ENCODE measurements at regions of chr3 and their contacts with region 1.

Region 1: DNA sequence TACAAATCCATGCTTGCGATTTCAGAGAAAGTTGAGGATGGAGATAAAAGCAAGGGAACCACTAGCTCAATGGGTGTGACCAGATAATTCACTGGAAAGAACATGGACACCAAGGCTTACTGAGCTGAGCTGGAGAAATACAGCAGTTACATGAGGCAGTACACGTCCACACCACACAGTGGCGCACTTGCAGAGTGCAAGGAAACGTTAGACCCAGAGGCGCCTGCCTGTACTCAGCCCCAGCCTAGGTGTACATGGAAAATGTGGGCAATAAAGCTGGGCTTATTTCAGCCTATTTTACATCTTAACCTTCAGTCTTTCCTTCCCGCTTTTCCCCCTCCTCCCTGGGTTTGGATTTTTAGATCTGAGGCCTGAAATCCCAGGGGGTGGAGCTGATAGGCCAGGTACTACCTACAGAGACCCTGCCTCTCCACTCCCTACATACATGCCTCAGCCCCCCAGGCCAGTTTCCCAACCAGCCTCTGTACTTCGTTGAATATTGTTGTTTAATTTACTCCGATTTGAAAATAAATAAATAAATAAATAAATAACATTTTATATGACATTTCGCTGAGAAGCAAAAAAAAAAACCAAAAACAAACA is 60.1 kb downstream of the PCOLCE2 start:
- DNase-seq: peak; percentile 78
- H3K4me3 ChIP-seq: no peak overlapping the region
- H3K4me3 Mint-ChIP-seq: no peak overlapping the region
- H3K27ac Mint-ChIP-seq: no peak overlapping the region
- H3K4me1 ChIP-seq: no peaks in the 10 kb centered on the region
- H3K4me1 Mint-ChIP-seq: no peaks in the 10 kb centered on the region
- H3K27me3 ChIP-seq: no peaks in the 10 kb centered on the region
- H3K27me3 Mint-ChIP-seq: peaks cover 2% of the 10 kb centered on the region
- CTCF ChIP-seq: peak; percentile 79 to 84

Region 2: DNA sequence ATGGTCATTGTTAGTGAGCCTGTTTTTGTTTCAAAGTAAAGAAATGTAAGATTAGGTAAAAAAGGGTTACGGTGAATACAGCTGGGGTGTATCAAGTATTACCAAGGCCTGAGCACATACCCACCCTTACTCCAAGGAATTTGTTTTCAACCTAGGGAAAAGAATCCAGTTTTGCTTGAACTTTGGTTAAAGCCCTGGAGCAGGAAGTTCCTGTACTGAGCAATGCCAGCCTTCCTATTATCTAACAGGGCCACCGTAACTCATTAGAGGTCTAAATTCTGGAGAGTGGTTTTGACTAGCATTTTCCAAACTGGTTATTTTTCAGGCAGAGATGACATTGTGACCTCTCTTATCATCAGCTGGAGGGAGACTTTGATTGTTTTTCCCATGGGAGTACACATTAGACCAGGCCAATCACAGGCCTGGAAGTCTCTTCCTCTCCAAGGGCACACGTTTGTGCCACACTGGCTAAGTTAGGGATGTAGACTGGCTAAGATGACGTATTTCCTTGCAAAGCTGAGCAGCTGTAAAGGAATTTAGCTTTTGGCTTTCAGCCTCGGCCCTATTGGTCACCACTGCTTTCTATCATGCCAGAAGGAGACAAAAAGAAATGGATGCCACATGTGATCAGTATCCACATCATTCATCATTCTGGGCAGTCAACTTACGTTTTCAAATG is 1118.1 kb before region 1 on chr3:
- CTCF ChIA-PET with region 1: no interaction called
- POLR2A ChIA-PET with region 1: no interaction called
- intact Hi-C with region 1: no loop called
- DNase-seq: no peak
- H3K4me3 ChIP-seq: no peak overlapping the region
- H3K4me3 Mint-ChIP-seq: no peak overlapping the region
- H3K27ac Mint-ChIP-seq: no peak overlapping the region
- H3K4me1 ChIP-seq: no peaks in the 10 kb centered on the region
- H3K4me1 Mint-ChIP-seq: no peaks in the 10 kb centered on the region
- H3K27me3 ChIP-seq: no peaks in the 10 kb centered on the region
- H3K27me3 Mint-ChIP-seq: no peaks in the 10 kb centered on the region
- CTCF ChIP-seq: no peak

Region 3: DNA sequence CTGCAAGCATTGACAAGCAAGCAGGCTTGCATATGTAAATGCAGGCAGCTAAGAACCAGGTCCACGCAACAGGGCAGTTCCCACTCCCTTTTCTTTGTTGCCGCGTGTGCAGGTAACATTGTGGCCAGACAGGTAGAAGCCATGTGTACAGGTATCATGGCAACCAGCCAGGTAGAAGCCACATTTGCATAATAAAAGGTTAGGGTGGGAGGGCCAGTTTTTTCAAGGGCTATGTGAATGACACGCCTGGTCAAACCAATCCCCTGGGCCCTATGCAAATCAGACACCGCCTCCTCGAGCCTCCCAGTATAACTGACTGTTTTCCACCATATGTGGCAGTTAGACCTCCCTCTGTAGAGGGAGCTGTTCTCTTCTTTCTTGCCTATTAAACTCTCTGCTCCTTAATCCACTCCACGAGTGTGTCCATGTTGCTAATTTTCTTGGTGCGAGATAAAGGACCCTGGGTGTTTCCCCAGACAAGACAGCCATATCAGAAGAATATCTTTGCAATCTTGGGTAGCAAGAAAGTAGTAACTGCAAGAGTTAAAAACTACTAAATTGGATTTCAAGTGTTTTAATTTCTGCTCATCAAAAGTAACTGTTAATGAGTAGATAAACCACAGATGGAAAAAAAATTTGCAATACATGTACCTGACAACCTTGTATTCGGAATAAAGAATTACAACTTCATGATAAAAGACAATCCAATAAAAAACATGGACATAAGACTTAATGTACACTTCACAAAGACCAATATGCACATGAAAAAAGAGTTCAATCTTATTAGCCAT is 38.2 kb after region 1 on chr3:
- CTCF ChIA-PET with region 1: no interaction called
- POLR2A ChIA-PET with region 1: no interaction called
- intact Hi-C with region 1: loop called (anchors 1 kb)
- DNase-seq: peak; percentile 81 to 87
- H3K4me3 ChIP-seq: no peak overlapping the region
- H3K4me3 Mint-ChIP-seq: no peak overlapping the region
- H3K27ac Mint-ChIP-seq: no peak overlapping the region
- H3K4me1 ChIP-seq: no peaks in the 10 kb centered on the region
- H3K4me1 Mint-ChIP-seq: no peaks in the 10 kb centered on the region
- H3K27me3 ChIP-seq: no peaks in the 10 kb centered on the region
- H3K27me3 Mint-ChIP-seq: peaks cover 8% of the 10 kb centered on the region
- CTCF ChIP-seq: peak; percentile 28 to 35

Region 4: DNA sequence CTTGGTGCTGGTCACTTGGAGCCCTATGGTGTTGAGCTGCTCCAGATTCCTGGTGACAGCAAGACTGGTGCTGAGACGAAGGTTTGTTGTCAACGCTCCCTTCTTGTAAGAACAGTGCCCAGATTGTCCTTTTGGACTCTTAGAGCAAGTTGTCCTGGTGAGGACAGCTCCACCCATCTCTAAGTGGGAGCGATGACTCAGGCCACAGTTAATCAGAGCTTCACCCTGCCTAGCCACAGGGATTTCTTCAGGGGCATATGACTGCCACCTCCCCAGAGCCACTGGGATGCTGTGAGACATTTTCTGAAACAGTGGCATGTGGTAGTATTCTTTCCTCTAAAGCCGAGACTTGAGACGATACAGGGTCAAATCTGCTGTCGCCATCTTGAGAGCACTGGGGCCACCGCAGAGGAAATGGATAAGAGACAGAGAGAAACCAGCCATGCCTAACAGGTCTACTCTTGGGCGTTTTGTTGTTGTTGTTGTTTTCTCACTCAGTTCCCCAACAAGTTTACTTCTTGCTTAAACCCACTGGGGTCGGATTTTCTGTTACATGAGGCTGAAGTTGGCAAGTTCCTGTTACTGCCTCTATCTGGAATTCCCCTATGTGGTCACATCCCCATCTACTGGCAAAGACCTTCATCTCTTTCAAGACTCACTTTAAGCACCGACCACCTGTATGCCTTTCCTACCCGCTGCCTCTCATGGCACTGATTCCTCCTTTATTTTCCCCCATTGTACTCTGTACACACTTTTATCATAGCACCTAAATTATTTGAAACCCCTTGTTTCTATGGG is 76.0 kb after region 1 on chr3:
- CTCF ChIA-PET with region 1: no interaction called
- POLR2A ChIA-PET with region 1: no interaction called
- intact Hi-C with region 1: loop called (anchors 1 kb)
- DNase-seq: peak in 1 of 2 experiments; percentile 4
- H3K4me3 ChIP-seq: no peak overlapping the region
- H3K4me3 Mint-ChIP-seq: no peak overlapping the region
- H3K27ac Mint-ChIP-seq: no peak overlapping the region
- H3K4me1 ChIP-seq: no peaks in the 10 kb centered on the region
- H3K4me1 Mint-ChIP-seq: no peaks in the 10 kb centered on the region
- H3K27me3 ChIP-seq: no peaks in the 10 kb centered on the region
- H3K27me3 Mint-ChIP-seq: peaks cover 11% of the 10 kb centered on the region
- CTCF ChIP-seq: peak in 1 of 2 experiments; percentile 32

Region 5: DNA sequence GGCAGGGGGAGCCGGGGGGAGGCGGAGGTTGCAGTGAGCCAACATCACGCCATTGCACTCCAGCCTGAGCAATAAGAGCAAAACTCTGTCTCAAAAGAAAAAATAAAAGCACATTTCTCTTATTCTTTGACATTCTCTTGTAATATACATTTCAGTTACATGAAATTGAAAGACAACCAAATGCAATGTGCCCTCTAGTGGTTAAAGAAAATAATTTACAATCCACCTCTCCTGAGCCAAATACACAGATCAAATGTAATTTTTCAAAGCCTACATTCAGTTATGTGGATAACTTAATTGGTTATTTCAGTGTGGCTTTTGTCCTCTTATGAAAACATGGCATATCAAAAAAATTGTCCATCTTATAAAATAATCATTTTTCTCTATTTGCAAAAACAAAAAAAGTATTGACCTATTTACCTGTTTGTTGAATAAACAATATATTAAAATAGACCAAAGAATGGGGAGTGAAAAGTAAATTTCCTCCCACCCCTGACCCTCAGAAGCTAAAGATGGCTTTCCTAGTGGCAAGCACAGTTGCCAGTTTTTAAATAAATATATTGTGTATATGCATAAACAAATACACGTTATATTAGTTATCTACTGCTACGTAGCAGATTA is 158.4 kb after region 1 on chr3:
- CTCF ChIA-PET with region 1: interaction called, 5 read pairs
- POLR2A ChIA-PET with region 1: no interaction called
- intact Hi-C with region 1: loop called (anchors 1 kb)
- DNase-seq: no peak
- H3K4me3 ChIP-seq: no peak overlapping the region
- H3K4me3 Mint-ChIP-seq: no peak overlapping the region
- H3K27ac Mint-ChIP-seq: no peak overlapping the region
- H3K4me1 ChIP-seq: no peaks in the 10 kb centered on the region
- H3K4me1 Mint-ChIP-seq: no peaks in the 10 kb centered on the region
- H3K27me3 ChIP-seq: no peaks in the 10 kb centered on the region
- H3K27me3 Mint-ChIP-seq: peaks cover 10% of the 10 kb centered on the region
- CTCF ChIP-seq: peak; percentile 44 to 63

Region 6: DNA sequence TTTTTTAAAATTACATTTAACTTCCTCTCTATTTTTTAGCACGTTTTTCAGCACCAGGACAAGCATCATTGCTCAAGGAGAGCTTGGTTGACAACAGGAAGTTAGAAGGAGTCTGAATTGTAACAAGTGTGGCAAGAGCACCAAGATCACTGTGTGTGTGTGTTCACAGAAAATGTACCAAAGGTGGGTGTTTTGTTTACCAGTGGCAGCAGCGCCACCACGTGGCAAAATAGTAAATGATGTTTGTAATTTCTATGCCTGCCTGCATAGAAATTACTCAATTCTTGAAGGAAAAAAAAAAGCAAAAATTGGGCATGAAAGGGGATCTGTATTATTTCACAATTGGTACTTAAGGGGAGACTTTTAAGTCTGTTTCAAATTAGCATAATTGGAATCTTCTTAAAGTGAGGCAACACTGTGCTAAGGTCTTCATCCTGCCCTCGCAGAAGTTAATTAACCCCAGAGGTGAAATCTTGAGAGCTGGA is 165.2 kb after region 1 on chr3:
- CTCF ChIA-PET with region 1: interaction called, 5 read pairs
- POLR2A ChIA-PET with region 1: no interaction called
- intact Hi-C with region 1: loop called (anchors 2 kb)
- DNase-seq: peak; percentile 46 to 62
- H3K4me3 ChIP-seq: no peak overlapping the region
- H3K4me3 Mint-ChIP-seq: no peak overlapping the region
- H3K27ac Mint-ChIP-seq: no peak overlapping the region
- H3K4me1 ChIP-seq: no peaks in the 10 kb centered on the region
- H3K4me1 Mint-ChIP-seq: no peaks in the 10 kb centered on the region
- H3K27me3 ChIP-seq: no peaks in the 10 kb centered on the region
- H3K27me3 Mint-ChIP-seq: peaks cover 3% of the 10 kb centered on the region
- CTCF ChIP-seq: peak; percentile 65 to 68